Colonic mucosa (tissue), 4 donors: ENCODE measurements at regions of chr3 and their contacts with region 1.

Region 1: GRCh38 chr3:183178629-183179549 is 16.4 kb upstream of the LAMP3 start:
- DNase-seq: peak; percentile 56
- H3K4me3 ChIP-seq: peak overlapping the region; percentile 46
- H3K27ac ChIP-seq: no peak overlapping the region
- H3K4me1 ChIP-seq: no peaks in the 10 kb centered on the region
- H3K27me3 ChIP-seq: peaks cover 32% of the 10 kb centered on the region
- CTCF ChIP-seq: no peak

Region 2: DNA sequence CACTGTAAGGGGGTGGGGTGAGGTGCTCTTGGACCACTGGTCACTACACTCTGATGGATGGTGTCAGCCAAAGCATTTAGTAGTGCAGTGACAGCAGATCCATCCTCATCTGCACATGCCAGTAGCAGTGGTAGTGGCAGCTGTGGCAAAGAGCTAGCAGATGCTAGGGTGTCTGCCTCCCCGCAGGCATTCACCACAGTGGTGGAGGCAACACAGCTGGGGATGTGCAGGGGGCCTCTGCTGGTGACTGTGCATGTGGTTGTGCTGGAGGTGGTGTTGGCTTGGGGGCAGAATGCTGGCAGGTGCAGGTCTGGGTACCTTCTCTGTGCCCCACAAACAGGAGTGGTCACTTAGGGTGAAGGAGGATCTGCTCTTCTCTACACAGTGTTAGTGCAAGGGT is 179.1 kb before region 1 on chr3:
- intact Hi-C with region 1: no loop called
- DNase-seq: no peak
- H3K4me3 ChIP-seq: no peak overlapping the region
- H3K27ac ChIP-seq: no peak overlapping the region
- H3K4me1 ChIP-seq: no peaks in the 10 kb centered on the region
- H3K27me3 ChIP-seq: no peaks in the 10 kb centered on the region
- CTCF ChIP-seq: no peak

Region 3: GRCh38 chr3:183122257-183122932 is 56.5 kb before region 1 on chr3:
- intact Hi-C with region 1: loop called (anchors 5 kb)
- DNase-seq: no peak
- H3K4me3 ChIP-seq: no peak overlapping the region
- H3K27ac ChIP-seq: no peak overlapping the region
- H3K4me1 ChIP-seq: no peaks in the 10 kb centered on the region
- H3K27me3 ChIP-seq: peaks cover under 1% of the 10 kb centered on the region
- CTCF ChIP-seq: peak; percentile 85

Region 4: GRCh38 chr3:183385698-183386613 is 207.1 kb after region 1 on chr3:
- intact Hi-C with region 1: loop called (anchors 1 kb)
- DNase-seq: peak; percentile 74
- H3K4me3 ChIP-seq: no peak overlapping the region
- H3K27ac ChIP-seq: no peak overlapping the region
- H3K4me1 ChIP-seq: no peaks in the 10 kb centered on the region
- H3K27me3 ChIP-seq: no peaks in the 10 kb centered on the region
- CTCF ChIP-seq: peak; percentile 56